CD4-positive, alpha-beta memory T cell (primary cell): ENCODE measurements at regions of chr5 and their contacts with region 1.

Region 1: GRCh38 chr5:54905943-54906537 is 79.4 kb downstream of the ESM1 start:
- DNase-seq: peak; percentile 51 to 62 (median 57)
- H3K4me3 ChIP-seq: no peak overlapping the region
- H3K4me3 Mint-ChIP-seq: no peak overlapping the region
- H3K27ac ChIP-seq: no peak overlapping the region
- H3K27ac Mint-ChIP-seq: no peak overlapping the region
- H3K4me1 ChIP-seq: peaks cover 9% of the 10 kb centered on the region
- H3K4me1 Mint-ChIP-seq: peaks cover 4 to 9% (median 8%) of the 10 kb centered on the region in 4 donors
- H3K27me3 ChIP-seq: no peaks in the 10 kb centered on the region
- H3K27me3 Mint-ChIP-seq: peaks cover 5 to 8% of the 10 kb centered on the region in 2 donors

Region 2: DNA sequence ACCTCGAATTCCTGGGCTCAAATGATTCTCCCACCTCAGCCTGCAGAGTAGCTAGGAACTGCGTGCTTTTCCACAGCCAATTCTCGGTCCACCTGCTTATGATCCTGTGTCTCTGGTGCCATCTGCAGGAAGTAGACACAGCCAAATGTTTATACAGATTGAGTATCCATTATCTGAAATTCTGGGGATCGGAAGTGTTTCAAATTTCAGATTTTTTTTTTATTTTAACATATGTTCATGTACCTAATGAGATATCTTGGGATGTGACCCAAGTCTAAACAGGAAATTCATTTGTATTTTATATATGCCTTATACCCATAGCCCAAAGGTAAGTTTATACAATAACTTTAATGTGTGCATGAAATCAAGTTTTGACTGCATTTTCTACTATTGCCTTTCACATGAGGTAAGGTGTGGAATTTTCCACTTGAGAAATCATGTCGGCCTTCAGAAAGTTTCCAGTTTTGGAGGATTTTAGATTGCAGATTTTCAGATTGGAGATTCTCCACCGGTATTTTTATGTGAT is 10.2 kb before region 1 on chr5:
- CTCF ChIA-PET with region 1: interaction called, 15 read pairs
- POLR2A ChIA-PET with region 1: no interaction called
- intact Hi-C with region 1: no loop called
- DNase-seq: no peak
- H3K4me3 ChIP-seq: no peak overlapping the region
- H3K4me3 Mint-ChIP-seq: peak overlapping the region; percentile 23 to 79 (median 70)
- H3K27ac ChIP-seq: no peak overlapping the region
- H3K27ac Mint-ChIP-seq: peak overlapping the region in 2 of 7 donors; percentile 6 to 34
- H3K4me1 ChIP-seq: no peaks in the 10 kb centered on the region
- H3K4me1 Mint-ChIP-seq: peaks cover 1 to 5% (median 4%) of the 10 kb centered on the region in 4 donors
- H3K27me3 ChIP-seq: no peaks in the 10 kb centered on the region
- H3K27me3 Mint-ChIP-seq: peaks cover 24 to 30% of the 10 kb centered on the region in 2 donors

Region 3: GRCh38 chr5:55159763-55160492 is 253.9 kb after region 1 on chr5 and contains the start of gene GPX8:
- CTCF ChIA-PET with region 1: interaction called, 191 read pairs
- POLR2A ChIA-PET with region 1: interaction called, 3 read pairs
- intact Hi-C with region 1: loop called (anchors 1 kb)
- DNase-seq: peak; percentile 45 to 56 (median 51)
- H3K4me3 ChIP-seq: no peak within 1 kb of the TSS
- H3K4me3 Mint-ChIP-seq: no peak within 1 kb of the TSS
- H3K27ac ChIP-seq: no peak within 1 kb of the TSS
- H3K27ac Mint-ChIP-seq: no peak within 1 kb of the TSS
- H3K4me1 ChIP-seq: no peaks in the 10 kb centered on the region
- H3K4me1 Mint-ChIP-seq: no peaks in the 10 kb centered on the region
- H3K27me3 ChIP-seq: no peaks in the 10 kb centered on the region
- H3K27me3 Mint-ChIP-seq: peaks cover 14 to 24% of the 10 kb centered on the region in 2 donors
- total RNA-seq, gene GPX8: not detected

Region 4: GRCh38 chr5:55577353-55578060 is 671.5 kb after region 1 on chr5:
- CTCF ChIA-PET with region 1: no interaction called
- POLR2A ChIA-PET with region 1: no interaction called
- intact Hi-C with region 1: no loop called
- DNase-seq: no peak
- H3K4me3 ChIP-seq: no peak overlapping the region
- H3K4me3 Mint-ChIP-seq: no peak overlapping the region
- H3K27ac ChIP-seq: no peak overlapping the region
- H3K27ac Mint-ChIP-seq: no peak overlapping the region
- H3K4me1 ChIP-seq: no peaks in the 10 kb centered on the region
- H3K4me1 Mint-ChIP-seq: peaks cover 4 to 10% (median 6%) of the 10 kb centered on the region in 4 donors
- H3K27me3 ChIP-seq: no peaks in the 10 kb centered on the region
- H3K27me3 Mint-ChIP-seq: peaks cover 1 to 4% of the 10 kb centered on the region in 2 donors